Activated CD4-positive, alpha-beta T cell treated with anti-CD3 and anti-CD28 coated beads for 36 hours (primary cell): ENCODE measurements at regions of chr13 and their contacts with region 1.

Region 1: DNA sequence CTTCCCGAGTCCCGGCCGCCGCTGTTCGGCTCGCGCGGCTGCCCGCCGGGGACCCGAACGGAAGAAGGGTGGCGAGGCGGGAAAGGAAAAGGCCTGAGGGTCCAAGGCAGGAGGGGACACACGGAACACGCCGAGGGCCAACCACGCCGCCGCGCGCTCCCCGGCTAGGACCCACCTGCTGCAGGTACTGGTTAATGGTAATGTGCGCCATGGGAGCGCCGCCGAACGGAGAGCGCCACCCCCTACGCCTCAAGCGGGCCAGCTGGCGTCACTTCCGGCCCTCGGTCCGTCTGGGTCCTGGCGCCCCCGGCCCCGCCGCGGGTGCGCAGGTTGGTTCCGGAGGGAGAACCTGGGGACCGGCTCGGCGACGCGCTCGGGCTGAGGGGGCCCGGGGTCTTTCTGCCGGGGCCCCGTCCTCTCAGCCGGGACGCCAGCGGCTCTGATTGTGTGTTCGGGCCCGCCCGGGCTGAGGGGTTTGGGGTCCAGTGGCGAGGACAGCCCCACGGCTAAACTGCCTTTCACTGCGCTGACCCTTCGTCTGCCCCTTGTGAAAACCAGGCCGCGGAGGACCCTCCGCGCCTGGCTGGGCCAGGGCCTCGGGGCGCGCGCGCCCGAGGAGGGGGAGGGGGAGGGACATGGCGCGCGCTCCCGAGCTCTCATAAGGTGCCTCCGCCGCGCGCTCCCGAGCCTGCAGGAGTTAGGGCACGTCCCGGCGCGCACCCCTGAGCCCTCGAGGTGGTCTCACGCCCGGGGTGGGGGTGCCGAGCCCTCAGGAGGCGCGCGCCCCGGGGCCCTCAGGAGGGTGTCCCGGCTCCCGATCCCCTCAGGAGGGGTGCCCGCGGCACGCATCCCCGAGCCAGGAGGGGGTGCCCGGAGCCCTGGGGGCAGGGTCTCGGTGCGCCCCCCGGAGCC is at the start of gene PCID2:
- DNase-seq: peak; percentile 93
- ATAC-seq: peak; percentile 77
- H3K4me3 Mint-ChIP-seq: peak within 1 kb of the TSS; percentile 90
- H3K27ac Mint-ChIP-seq: peak within 1 kb of the TSS; percentile 90
- H3K4me1 Mint-ChIP-seq: peaks cover 58% of the 10 kb centered on the region
- H3K27me3 Mint-ChIP-seq: no peaks in the 10 kb centered on the region
- total RNA-seq, gene PCID2: 66.7 to 72.8 TPM

Region 2: GRCh38 chr13:112587212-112587763 is 621.4 kb before region 1 on chr13:
- CTCF ChIA-PET with region 1: no interaction called
- POLR2A ChIA-PET with region 1: no interaction called
- intact Hi-C with region 1: loop called in 1 of 2 experiments (anchors 1 kb)
- DNase-seq: peak; percentile 84
- ATAC-seq: peak; percentile 79
- H3K4me3 Mint-ChIP-seq: peak overlapping the region; percentile 96
- H3K27ac Mint-ChIP-seq: peak overlapping the region; percentile 97
- H3K4me1 Mint-ChIP-seq: peaks cover 46% of the 10 kb centered on the region
- H3K27me3 Mint-ChIP-seq: no peaks in the 10 kb centered on the region

Region 3: GRCh38 chr13:112968908-112969691 is 239.6 kb before region 1 on chr13 and contains the start of gene MCF2L:
- CTCF ChIA-PET with region 1: no interaction called
- POLR2A ChIA-PET with region 1: no interaction called
- intact Hi-C with region 1: loop called in 1 of 2 experiments (anchors 1 kb)
- DNase-seq: peak; percentile 82
- ATAC-seq: peak; percentile 82
- H3K4me3 Mint-ChIP-seq: peak within 1 kb of the TSS; percentile 93
- H3K27ac Mint-ChIP-seq: peak within 1 kb of the TSS; percentile 93
- H3K4me1 Mint-ChIP-seq: peaks cover 22% of the 10 kb centered on the region
- H3K27me3 Mint-ChIP-seq: no peaks in the 10 kb centered on the region
- total RNA-seq, gene MCF2L: 8.4 to 8.7 TPM

Region 4: DNA sequence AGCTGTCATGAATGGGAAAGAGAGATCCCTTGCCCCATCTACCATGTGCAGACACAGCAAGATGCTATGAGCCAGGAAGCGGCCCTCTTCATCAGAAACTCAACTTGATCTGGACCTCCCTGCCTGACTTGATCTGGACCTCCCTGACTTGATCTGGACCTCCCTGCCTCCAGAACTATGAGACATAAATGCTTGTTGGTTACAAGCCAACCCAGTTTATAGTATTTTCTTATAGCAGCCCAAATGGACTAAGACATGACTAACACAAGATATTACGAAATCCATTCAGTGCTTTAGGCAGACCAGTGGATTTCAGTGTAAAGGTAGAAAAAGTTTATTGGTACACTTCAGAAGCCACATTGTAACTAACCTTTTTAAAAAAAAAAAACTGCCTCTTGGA is 15.8 kb before region 1 on chr13:
- CTCF ChIA-PET with region 1: no interaction called
- POLR2A ChIA-PET with region 1: no interaction called
- intact Hi-C with region 1: no loop called
- DNase-seq: no peak
- ATAC-seq: no peak
- H3K4me3 Mint-ChIP-seq: no peak overlapping the region
- H3K27ac Mint-ChIP-seq: no peak overlapping the region
- H3K4me1 Mint-ChIP-seq: peaks cover 5% of the 10 kb centered on the region
- H3K27me3 Mint-ChIP-seq: no peaks in the 10 kb centered on the region

Region 5: GRCh38 chr13:113238536-113238935 is 29.9 kb after region 1 on chr13:
- CTCF ChIA-PET with region 1: no interaction called
- POLR2A ChIA-PET with region 1: no interaction called
- intact Hi-C with region 1: no loop called
- DNase-seq: no peak
- ATAC-seq: no peak
- H3K4me3 Mint-ChIP-seq: no peak overlapping the region
- H3K27ac Mint-ChIP-seq: no peak overlapping the region
- H3K4me1 Mint-ChIP-seq: no peaks in the 10 kb centered on the region
- H3K27me3 Mint-ChIP-seq: no peaks in the 10 kb centered on the region

Region 6: DNA sequence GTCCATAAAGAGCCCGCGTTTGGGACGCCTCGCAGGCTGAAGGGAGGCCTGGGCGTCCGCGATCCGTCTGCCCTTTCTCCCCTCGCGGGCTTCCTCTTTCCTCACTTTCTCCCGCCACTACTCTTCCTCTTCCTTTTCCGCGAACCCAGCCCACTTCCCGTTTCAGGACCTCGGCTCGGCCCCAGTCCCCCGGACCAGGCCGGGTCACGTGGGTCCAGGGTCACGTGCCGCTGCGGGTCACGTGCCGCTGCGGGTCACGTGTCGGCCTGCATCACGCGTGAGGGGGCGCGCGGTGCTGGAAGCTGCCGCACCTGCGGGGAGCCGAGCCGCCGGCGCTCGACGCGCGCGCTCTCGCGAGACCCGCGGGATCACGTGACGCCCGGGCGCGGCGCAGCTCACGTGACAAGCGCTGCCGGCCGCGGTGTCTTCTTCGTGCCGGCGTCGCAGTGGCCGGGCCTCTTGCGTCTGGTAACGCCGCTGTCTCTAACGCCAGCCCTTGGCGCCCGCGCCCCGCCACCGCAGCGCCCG is 88.2 kb after region 1 on chr13 and contains the start of gene LAMP1:
- CTCF ChIA-PET with region 1: no interaction called
- POLR2A ChIA-PET with region 1: interaction called, 7 read pairs
- intact Hi-C with region 1: loop called (anchors 1 kb)
- DNase-seq: peak; percentile 99
- ATAC-seq: peak; percentile 88
- H3K4me3 Mint-ChIP-seq: peak within 1 kb of the TSS; percentile 89
- H3K27ac Mint-ChIP-seq: peak within 1 kb of the TSS; percentile 100
- H3K4me1 Mint-ChIP-seq: peaks cover 31% of the 10 kb centered on the region
- H3K27me3 Mint-ChIP-seq: peaks cover 10% of the 10 kb centered on the region
- total RNA-seq, gene LAMP1: 32.2 to 36.0 TPM

Region 7: DNA sequence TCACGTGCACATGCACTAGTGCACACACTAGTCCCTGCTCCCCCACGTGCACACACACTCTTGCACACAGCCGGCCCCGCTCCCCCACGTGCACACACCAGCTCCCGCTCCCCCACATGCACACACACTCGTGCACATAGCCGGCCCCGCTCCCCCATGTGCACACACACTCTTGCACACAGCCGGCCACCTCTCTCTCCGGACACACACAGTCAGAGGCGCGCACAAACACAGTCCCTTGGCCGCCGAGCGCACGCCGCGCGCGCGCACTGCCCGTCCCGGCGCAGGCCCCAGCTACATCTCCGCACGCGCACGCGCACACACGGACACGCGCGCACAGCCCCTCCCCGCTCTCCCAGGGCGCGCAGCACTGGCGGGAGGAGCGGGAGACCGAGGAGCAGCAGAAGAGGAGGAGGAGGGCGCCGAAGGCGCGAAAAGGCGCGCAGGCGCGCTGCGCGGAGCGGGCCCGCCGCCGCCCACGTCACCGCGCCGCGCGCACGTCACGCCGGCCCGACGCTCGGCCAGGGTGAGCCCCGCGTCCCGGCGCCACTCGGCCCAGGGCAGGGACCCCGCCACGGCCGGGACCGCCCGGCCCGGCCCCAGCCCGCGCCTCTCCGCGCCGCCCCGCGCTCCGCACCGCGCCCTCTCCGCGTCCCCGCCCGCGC is 375.7 kb after region 1 on chr13 and contains the start of gene TFDP1:
- CTCF ChIA-PET with region 1: no interaction called
- POLR2A ChIA-PET with region 1: no interaction called
- intact Hi-C with region 1: loop called in 1 of 2 experiments (anchors 1 kb)
- DNase-seq: peak; percentile 93
- ATAC-seq: peak; percentile 92
- H3K4me3 Mint-ChIP-seq: peak within 1 kb of the TSS; percentile 90
- H3K27ac Mint-ChIP-seq: peak within 1 kb of the TSS; percentile 80
- H3K4me1 Mint-ChIP-seq: peaks cover 36% of the 10 kb centered on the region
- H3K27me3 Mint-ChIP-seq: no peaks in the 10 kb centered on the region
- total RNA-seq, gene TFDP1: 159 to 175 TPM

Region 8: DNA sequence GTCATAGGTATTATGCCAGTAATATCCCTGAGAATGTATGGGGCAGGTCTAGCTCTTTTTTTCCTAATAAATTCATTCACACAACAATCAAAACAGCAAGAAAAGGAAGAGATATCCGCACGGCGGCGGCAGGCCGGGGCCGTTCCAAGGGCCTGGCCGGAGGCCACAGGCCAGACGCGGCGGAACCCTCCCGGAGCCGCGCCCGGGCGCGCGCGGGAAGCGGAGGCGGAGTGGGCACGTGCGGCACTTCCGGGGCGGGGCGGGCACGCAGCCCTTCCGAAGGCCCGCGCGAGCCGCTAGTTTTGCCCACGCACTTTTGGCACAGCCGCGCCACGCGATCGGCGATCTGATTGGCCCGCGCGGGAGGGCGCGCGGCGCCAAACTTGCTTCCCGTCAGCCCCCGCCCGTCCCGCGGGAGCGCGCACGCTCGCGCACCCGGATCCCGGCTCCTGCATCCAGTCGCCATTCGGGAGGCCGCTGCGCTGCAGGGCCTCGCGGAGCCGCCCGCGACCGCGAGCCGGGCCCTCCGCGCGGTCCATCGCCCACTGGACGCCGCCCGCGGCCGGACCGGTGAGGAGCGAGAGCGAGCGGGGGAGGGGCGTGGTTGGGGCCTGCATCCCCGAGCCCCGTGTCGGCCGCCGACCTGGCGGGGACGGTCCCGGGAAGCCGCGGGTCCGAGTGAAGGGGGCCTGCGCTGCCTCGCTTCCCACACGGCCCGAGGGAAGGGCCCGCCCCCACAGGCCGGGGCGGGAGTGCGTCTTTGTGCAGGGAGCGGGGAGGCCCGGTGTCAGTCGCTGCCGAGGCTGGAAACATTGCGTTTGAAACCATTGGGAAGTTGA is 1105.6 kb after region 1 on chr13 and contains the start of gene CHAMP1:
- CTCF ChIA-PET with region 1: no interaction called
- POLR2A ChIA-PET with region 1: no interaction called
- intact Hi-C with region 1: loop called in 1 of 2 experiments (anchors 1 kb)
- DNase-seq: peak; percentile 97
- ATAC-seq: peak; percentile 77
- H3K4me3 Mint-ChIP-seq: peak within 1 kb of the TSS; percentile 97
- H3K27ac Mint-ChIP-seq: peak within 1 kb of the TSS; percentile 98
- H3K4me1 Mint-ChIP-seq: peaks cover 43% of the 10 kb centered on the region
- H3K27me3 Mint-ChIP-seq: no peaks in the 10 kb centered on the region
- total RNA-seq, gene CHAMP1: 39.4 to 54.3 TPM